Common myeloid progenitor, CD34-positive (primary cell): ENCODE measurements at regions of chr17 and their contacts with region 1.

Region 1: GRCh38 chr17:49425004-49425286 is 10.3 kb upstream of the PHB1 start:
- DNase-seq: no peak
- H3K4me3 ChIP-seq: no peak overlapping the region
- H3K27ac ChIP-seq: no peak overlapping the region
- H3K4me1 ChIP-seq: no peaks in the 10 kb centered on the region
- H3K27me3 ChIP-seq: no peaks in the 10 kb centered on the region

Region 2: GRCh38 chr17:49327835-49328784 is 96.8 kb before region 1 on chr17:
- CTCF ChIA-PET with region 1: no interaction called
- POLR2A ChIA-PET with region 1: no interaction called
- DNase-seq: peak in 2 of 3 donors; percentile 92 to 95
- H3K4me3 ChIP-seq: no peak overlapping the region
- H3K27ac ChIP-seq: peak overlapping the region in 1 of 2 experiments; percentile 9
- H3K4me1 ChIP-seq: peaks cover 7 to 20% (median 9%) of the 10 kb centered on the region in 4 experiments
- H3K27me3 ChIP-seq: no peaks in the 10 kb centered on the region

Region 3: GRCh38 chr17:49407981-49408501 is 16.9 kb before region 1 on chr17:
- CTCF ChIA-PET with region 1: interaction called, 10 read pairs
- POLR2A ChIA-PET with region 1: no interaction called
- DNase-seq: peak; percentile 82 to 91 (median 88)
- H3K4me3 ChIP-seq: peak overlapping the region in 1 of 7 experiments; percentile 14
- H3K27ac ChIP-seq: peak overlapping the region in 1 of 2 experiments; percentile 2
- H3K4me1 ChIP-seq: peaks cover 5 to 62% (median 57%) of the 10 kb centered on the region in 4 experiments
- H3K27me3 ChIP-seq: no peaks in the 10 kb centered on the region

Region 4: GRCh38 chr17:49434821-49435670 is 10.1 kb after region 1 on chr17:
- CTCF ChIA-PET with region 1: interaction called, 18 read pairs
- POLR2A ChIA-PET with region 1: no interaction called
- DNase-seq: peak; percentile 40 to 52 (median 46)
- H3K4me3 ChIP-seq: no peak overlapping the region
- H3K27ac ChIP-seq: no peak overlapping the region
- H3K4me1 ChIP-seq: peaks cover 3 to 13% (median 11%) of the 10 kb centered on the region in 4 experiments
- H3K27me3 ChIP-seq: peaks cover 0 to 14% (median 7%) of the 10 kb centered on the region in 5 experiments